ENCODE measurements at regions of chr15 and their contacts with region 1.

Region 1: GRCh38 chr15:29302871-29303270 is 33.2 kb upstream of the NSMCE3 start:
- DNase-seq: no peak
- ATAC-seq: no peak
- H3K4me3 Mint-ChIP-seq: no peak overlapping the region
- H3K27ac Mint-ChIP-seq: no peak overlapping the region
- H3K4me1 Mint-ChIP-seq: no peaks in the 10 kb centered on the region
- H3K27me3 Mint-ChIP-seq: peaks cover 6% of the 10 kb centered on the region

Region 2: DNA sequence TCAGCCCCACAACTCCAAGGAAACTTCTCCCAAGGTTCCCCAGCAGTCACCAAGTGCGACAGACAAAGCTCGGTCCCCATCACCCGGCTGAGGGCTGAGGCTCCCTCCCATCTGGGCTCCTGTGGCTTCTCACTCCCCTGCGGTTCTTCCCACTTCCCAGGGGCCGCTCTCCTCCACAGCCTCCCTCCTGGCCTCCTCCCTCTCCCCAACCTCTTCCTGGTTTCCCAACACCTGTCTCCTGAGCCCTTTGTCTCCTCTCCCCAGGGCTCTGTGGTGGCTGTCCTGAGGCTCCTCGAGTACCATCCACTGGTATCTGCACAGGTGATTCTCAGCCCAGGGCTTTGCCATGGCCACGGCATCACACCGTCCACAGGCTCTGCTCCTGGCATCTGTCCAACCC is 80.0 kb after region 1 on chr15:
- CTCF ChIA-PET with region 1: no interaction called
- POLR2A ChIA-PET with region 1: interaction called, 15 read pairs
- intact Hi-C with region 1: no loop called
- DNase-seq: no peak
- ATAC-seq: no peak
- H3K4me3 Mint-ChIP-seq: no peak overlapping the region
- H3K27ac Mint-ChIP-seq: no peak overlapping the region
- H3K4me1 Mint-ChIP-seq: no peaks in the 10 kb centered on the region
- H3K27me3 Mint-ChIP-seq: peaks cover 27% of the 10 kb centered on the region

Measured in activated CD4-positive, alpha-beta T cell treated with anti-CD3 and anti-CD28 coated beads for 36 hours (primary cell).